Panc1 (cell line): ENCODE measurements at regions of chr1 and their contacts with region 1.

Region 1: GRCh38 chr1:9402256-9402616 is 109.5 kb downstream of the SPSB1 start:
- DNase-seq: no peak
- ATAC-seq: peak; percentile 1; the same call in 1 of the 2 replicates
- H3K4me3 ChIP-seq: no peak overlapping the region
- H3K27ac ChIP-seq: peak overlapping the region; percentile 96
- H3K4me1 ChIP-seq: peaks cover 48% of the 10 kb centered on the region
- H3K27me3 ChIP-seq: no peaks in the 10 kb centered on the region
- CTCF ChIP-seq: no peak

Region 2: DNA sequence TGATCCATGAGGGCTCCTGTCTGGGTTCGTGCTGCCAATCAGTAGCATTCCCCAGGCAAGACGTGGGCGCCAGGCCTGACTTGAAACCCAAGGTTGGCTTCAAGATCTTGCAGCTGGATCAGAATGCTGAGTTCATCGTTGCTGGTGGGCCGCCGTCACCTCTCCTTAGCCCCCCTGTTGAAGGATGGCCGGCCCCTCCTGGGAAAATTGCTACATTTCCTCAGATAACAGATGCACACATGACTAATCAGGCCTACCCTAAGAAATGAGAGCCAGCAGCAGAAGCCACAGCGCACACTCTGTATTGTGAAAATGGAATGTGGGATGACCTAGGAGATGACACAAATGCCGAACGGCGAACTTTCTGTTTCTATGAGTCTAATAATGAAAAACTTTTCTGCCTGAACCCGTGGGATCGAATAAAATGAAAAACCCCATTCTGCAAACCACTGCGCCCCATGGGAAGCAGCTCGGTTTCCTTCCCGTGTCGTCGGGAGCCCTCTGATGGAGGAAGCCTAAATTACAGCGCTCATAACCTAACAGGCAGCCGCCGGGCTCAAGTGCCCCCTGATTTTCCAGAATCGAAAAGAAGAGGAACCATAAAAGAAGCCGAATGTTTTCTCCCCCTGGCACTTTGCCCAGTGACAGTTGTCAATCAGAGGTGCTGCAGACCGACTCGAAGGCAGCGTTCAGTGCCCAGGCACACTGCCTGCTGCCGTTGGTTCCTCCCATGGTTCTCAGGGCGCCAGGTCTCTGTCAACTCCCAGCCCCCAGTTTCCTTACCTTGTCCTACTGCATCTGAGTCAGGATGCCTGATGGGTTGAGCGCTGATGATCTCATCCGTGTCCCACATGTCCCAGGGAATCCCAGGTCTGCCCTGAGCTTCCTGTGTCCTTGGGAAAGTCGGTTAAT is 205.9 kb before region 1 on chr1:
- CTCF ChIA-PET with region 1: no interaction called
- POLR2A ChIA-PET with region 1: no interaction called
- in situ Hi-C with region 1: no loop called
- intact Hi-C with region 1: no loop called
- DNase-seq: no peak
- ATAC-seq: peak; percentile 78
- H3K4me3 ChIP-seq: peak overlapping the region in 1 of 2 experiments; percentile 15; a peak in 1 of 4 replicates
- H3K27ac ChIP-seq: no peak overlapping the region; the same call in 1 of the 2 replicates
- H3K4me1 ChIP-seq: peaks cover 16% of the 10 kb centered on the region
- H3K27me3 ChIP-seq: no peaks in the 10 kb centered on the region
- CTCF ChIP-seq: peak; percentile 93

Region 3: DNA sequence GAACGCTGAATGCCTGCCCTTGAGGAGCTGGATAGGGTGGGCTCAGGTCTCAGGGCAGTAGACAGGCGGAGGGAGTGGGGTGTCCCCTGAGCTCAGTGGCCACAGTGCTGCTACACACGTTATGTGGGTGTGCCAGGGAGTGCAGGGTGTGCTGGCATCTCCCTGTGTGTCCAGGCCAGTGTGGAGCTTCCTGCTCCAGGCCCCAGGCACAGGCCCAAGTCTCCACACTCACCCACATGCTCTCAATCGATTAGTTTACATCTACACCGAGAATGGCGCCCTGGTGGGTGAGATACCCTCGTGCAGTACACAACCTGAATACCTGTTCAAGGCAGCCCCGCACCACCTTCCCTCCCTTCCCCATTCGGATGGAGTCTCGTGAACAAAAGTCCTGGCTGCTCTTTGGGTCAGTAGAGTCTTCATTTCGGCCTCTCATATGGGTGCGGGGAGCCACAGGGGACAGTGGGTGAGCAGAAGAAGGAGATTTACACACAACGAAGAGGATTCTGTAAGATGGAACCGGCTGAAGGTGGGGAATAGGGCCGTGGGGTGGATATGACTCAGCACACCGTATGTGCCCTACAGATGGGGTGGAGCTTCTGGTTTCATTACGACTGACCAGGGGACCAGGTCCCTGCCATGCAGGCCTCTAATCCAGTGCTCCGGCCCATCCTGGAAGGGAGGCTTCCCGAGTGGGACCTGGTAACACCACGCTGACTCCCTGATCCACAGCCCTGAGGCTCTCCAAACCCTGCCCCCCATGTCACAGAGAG is 16.2 kb before region 1 on chr1:
- CTCF ChIA-PET with region 1: interaction called, 4 read pairs
- POLR2A ChIA-PET with region 1: interaction called, 11 read pairs
- in situ Hi-C with region 1: no loop called
- intact Hi-C with region 1: no loop called
- DNase-seq: no peak
- ATAC-seq: 0 out of 2 replicates have a peak, but pooled peaks have one; percentile 22
- H3K4me3 ChIP-seq: no peak overlapping the region
- H3K27ac ChIP-seq: peak overlapping the region; percentile 84
- H3K4me1 ChIP-seq: peaks cover 33% of the 10 kb centered on the region
- H3K27me3 ChIP-seq: no peaks in the 10 kb centered on the region
- CTCF ChIP-seq: no peak

Region 4: GRCh38 chr1:9455487-9456234 is 53.4 kb after region 1 on chr1:
- CTCF ChIA-PET with region 1: no interaction called
- POLR2A ChIA-PET with region 1: no interaction called
- in situ Hi-C with region 1: no loop called
- intact Hi-C with region 1: no loop called
- DNase-seq: no peak
- ATAC-seq: peak; percentile 85
- H3K4me3 ChIP-seq: no peak overlapping the region
- H3K27ac ChIP-seq: peak overlapping the region; percentile 25
- H3K4me1 ChIP-seq: peaks cover 13% of the 10 kb centered on the region
- H3K27me3 ChIP-seq: no peaks in the 10 kb centered on the region
- CTCF ChIP-seq: peak; percentile 88

Region 5: GRCh38 chr1:9733160-9733789 is 331.0 kb after region 1 on chr1:
- CTCF ChIA-PET with region 1: no interaction called
- POLR2A ChIA-PET with region 1: interaction called, 12 read pairs
- in situ Hi-C with region 1: no loop called
- intact Hi-C with region 1: no loop called
- DNase-seq: no peak
- ATAC-seq: no peak
- H3K4me3 ChIP-seq: no peak overlapping the region
- H3K27ac ChIP-seq: no peak overlapping the region
- H3K4me1 ChIP-seq: no peaks in the 10 kb centered on the region
- H3K27me3 ChIP-seq: no peaks in the 10 kb centered on the region
- CTCF ChIP-seq: no peak